ENCODE measurements at regions of chr10 and their contacts with region 1.

Region 1: DNA sequence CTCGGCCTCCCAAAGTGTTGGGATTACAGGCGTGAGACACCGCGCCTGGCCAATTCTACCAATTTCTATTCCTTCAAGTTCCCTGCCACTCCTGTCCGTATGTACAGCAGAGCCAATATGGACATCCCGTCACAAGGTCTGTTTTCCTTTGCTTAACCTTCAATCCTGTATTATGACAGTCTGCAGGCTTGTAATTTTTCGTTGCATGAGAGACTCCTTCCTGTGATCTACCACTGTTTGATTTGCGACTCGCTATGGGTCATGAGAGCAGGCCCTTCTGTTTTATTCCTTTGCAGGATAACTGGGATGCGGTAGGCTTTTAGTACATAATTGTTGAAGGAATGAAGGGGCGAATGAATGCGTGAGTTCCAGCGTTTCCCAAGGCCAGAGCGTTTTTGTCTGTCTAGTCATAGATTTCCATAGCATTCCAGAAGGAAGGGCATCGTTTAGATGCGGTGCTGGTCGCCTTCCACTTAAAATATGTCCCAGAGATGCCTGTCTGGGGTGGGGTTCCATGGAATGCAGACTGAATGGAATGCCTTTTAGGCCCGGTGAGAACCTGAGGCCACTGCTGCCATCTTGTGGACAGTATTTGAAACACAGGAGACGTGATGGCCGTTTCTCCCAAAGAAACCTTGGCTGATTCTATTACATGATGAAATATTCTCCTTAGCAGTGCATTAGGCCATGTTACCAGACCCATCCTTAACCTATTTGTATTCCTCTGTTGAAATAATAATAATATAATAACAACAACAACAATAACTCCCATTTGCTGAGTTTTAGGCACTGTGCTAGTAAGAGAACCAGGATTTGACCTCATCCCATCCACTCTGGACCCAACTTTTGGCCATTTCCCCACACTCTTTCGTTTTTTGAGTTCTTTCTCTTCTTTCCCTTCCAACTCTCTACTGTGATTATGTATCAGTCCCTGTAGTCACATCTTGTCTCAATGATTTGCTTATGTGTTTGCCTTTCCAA is 193.2 kb downstream of the MYOF start:
- DNase-seq: peak; percentile 77 to 84
- H3K4me3 ChIP-seq: no peak overlapping the region
- H3K27ac ChIP-seq: peak overlapping the region; percentile 66
- H3K4me1 ChIP-seq: peaks cover 5% of the 10 kb centered on the region
- H3K27me3 ChIP-seq: no peaks in the 10 kb centered on the region
- CTCF ChIP-seq: peak; percentile 76

Region 2: GRCh38 chr10:92891885-92892704 is 396.8 kb before region 1 on chr10:
- CTCF ChIA-PET with region 1: no interaction called
- POLR2A ChIA-PET with region 1: no interaction called
- intact Hi-C with region 1: loop called (anchors 5 kb)
- DNase-seq: peak; percentile 88 to 95
- H3K4me3 ChIP-seq: no peak overlapping the region
- H3K27ac ChIP-seq: peak overlapping the region; percentile 81
- H3K4me1 ChIP-seq: peaks cover 52% of the 10 kb centered on the region
- H3K27me3 ChIP-seq: no peaks in the 10 kb centered on the region
- CTCF ChIP-seq: no peak

Region 3: GRCh38 chr10:93080350-93081046 is 208.4 kb before region 1 on chr10:
- CTCF ChIA-PET with region 1: no interaction called
- POLR2A ChIA-PET with region 1: no interaction called
- intact Hi-C with region 1: loop called (anchors 1 kb)
- DNase-seq: peak in 1 of 2 experiments; percentile 44
- H3K4me3 ChIP-seq: no peak overlapping the region
- H3K27ac ChIP-seq: no peak overlapping the region
- H3K4me1 ChIP-seq: no peaks in the 10 kb centered on the region; the same call in 1 of the 2 replicates
- H3K27me3 ChIP-seq: no peaks in the 10 kb centered on the region
- CTCF ChIP-seq: peak; percentile 85

Region 4: DNA sequence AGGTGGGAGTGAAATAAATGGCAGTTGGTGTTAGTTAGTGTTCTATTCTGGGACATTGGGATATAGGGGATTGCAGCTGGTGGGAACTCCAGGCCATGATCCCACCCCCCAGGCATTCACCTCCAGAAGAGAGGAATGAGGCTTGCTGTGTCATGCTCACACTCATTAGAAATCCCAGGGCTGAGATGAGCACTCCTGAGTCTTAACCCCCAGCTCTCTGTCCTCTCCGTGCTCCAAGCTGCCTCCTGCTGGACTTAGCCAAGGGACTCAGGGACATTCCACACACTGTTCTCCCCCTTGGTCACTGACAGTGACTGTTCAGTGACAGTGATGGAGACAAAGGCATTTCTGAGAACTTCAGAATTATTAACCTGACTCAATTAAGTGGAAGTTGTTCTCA is 193.7 kb before region 1 on chr10:
- CTCF ChIA-PET with region 1: no interaction called
- POLR2A ChIA-PET with region 1: interaction called, 21 read pairs
- intact Hi-C with region 1: no loop called
- DNase-seq: no peak
- H3K4me3 ChIP-seq: no peak overlapping the region
- H3K27ac ChIP-seq: no peak overlapping the region
- H3K4me1 ChIP-seq: no peaks in the 10 kb centered on the region
- H3K27me3 ChIP-seq: no peaks in the 10 kb centered on the region
- CTCF ChIP-seq: no peak

Region 5: DNA sequence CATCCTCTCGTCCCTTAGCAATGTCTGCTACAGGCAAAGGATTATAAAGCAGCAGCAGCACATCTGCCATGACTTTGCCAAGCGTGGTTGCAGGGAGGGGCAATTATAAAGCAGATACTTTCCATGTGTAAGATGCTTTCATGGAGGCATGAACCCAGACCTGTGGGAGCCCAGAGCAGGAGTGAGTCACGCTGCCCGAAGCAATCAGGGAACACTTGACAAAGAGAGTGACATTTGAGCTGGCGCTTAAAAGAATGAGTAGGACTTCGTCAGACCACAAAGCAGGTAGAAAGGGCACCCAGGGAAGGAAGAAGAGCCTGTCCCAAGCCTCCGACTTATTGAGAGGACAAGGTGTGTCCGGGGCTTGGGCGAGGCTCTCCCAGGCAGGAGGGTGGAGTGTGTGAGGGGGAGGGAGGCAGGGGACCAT is 46.0 kb after region 1 on chr10:
- CTCF ChIA-PET with region 1: no interaction called
- POLR2A ChIA-PET with region 1: no interaction called
- intact Hi-C with region 1: loop called (anchors 1 kb)
- DNase-seq: peak; percentile 87 to 96
- H3K4me3 ChIP-seq: no peak overlapping the region
- H3K27ac ChIP-seq: peak overlapping the region; percentile 83
- H3K4me1 ChIP-seq: peaks cover 30% of the 10 kb centered on the region
- H3K27me3 ChIP-seq: no peaks in the 10 kb centered on the region
- CTCF ChIP-seq: no peak

Measured in PC-9 (cell line).